ENCODE measurements at regions of chr15 and their contacts with region 1.

Region 1: DNA sequence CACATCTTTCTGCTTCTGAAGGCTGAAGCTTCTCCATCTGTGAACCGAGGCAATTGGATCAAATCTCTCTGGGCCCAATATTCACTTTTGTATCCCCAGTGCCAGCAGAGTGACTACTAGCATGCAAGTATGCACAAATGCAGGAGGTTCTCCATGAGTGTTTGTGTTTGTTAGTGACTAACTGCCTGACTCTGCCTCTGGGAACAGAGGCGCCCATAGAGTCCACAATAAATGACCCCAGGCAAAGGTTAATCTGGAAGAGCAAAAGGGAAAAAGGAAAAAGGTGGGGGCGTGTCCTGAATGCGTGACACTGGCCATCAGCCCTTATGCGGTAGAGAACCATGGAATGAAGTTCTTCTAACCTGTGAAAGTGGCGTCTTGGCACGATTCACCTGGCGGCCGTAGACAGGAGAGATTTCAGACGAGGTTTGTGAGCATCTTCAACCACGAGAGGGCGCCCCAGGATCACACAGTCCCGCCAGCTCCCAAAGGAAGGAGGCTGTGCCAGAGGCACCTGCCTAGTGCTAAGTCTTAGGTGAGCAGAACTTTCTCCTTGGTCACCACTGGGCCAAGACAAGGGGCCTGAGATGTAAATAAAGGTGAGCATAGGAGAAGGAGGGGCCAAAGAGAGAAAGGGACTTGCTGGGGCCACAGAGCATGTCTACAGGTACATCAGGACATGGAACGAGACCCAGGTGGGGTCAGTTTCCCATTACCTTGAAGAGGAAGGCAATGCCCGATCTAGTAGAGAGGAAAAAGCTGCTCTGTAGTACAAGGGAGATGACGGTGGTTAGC is 44.2 kb downstream of the RBPMS2 start:
- DNase-seq: peak; percentile 84 to 89
- H3K4me3 ChIP-seq: no peak overlapping the region
- H3K4me3 Mint-ChIP-seq: no peak overlapping the region
- H3K27ac Mint-ChIP-seq: no peak overlapping the region
- H3K4me1 ChIP-seq: no peaks in the 10 kb centered on the region
- H3K4me1 Mint-ChIP-seq: no peaks in the 10 kb centered on the region
- H3K27me3 ChIP-seq: no peaks in the 10 kb centered on the region
- H3K27me3 Mint-ChIP-seq: no peaks in the 10 kb centered on the region
- CTCF ChIP-seq: peak; percentile 89

Region 2: GRCh38 chr15:64216730-64217428 is 514.3 kb before region 1 on chr15:
- CTCF ChIA-PET with region 1: no interaction called
- POLR2A ChIA-PET with region 1: interaction called, 22 read pairs
- intact Hi-C with region 1: no loop called
- DNase-seq: peak; percentile 32 to 49
- H3K4me3 ChIP-seq: no peak overlapping the region
- H3K4me3 Mint-ChIP-seq: no peak overlapping the region
- H3K27ac Mint-ChIP-seq: no peak overlapping the region
- H3K4me1 ChIP-seq: peaks cover 14% of the 10 kb centered on the region
- H3K4me1 Mint-ChIP-seq: peaks cover 5% of the 10 kb centered on the region
- H3K27me3 ChIP-seq: no peaks in the 10 kb centered on the region
- H3K27me3 Mint-ChIP-seq: no peaks in the 10 kb centered on the region
- CTCF ChIP-seq: no peak

Region 3: DNA sequence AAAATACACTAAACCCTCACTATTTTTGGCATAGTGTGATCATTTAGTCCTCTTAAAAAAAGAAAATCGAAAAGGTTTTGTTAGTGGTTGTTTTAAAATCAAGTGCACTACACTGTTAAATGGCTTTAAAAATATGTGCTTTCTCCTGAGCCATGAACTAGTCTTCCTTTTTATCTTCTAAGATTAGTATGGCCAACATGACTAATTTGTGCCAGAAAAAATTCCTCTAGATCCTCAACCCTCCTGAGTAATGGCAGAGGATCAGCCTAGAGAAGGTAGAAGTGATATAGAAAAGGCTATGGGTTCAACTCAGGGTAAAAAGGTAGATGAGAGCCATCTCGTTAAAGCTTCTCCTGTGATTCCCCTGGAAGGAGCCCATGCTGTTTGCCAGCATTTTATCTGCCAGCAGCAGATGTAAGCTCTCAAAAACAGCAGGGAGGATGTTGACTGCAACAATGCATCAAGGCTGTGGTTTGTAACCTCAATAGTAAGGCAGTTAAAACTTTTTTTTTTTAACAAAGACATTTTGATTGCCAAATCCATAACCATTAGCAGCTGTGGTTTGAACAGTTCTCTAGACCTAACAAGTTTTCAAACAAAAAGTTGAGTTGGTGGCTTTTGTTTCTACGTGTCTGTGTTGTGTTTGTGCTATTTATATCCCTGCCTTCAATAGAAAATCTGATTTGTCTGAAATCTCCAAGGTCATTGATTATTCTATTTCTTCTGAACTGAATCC is 301.0 kb before region 1 on chr15:
- CTCF ChIA-PET with region 1: no interaction called
- POLR2A ChIA-PET with region 1: no interaction called
- intact Hi-C with region 1: loop called (anchors 2 kb)
- DNase-seq: no peak
- H3K4me3 ChIP-seq: no peak overlapping the region
- H3K4me3 Mint-ChIP-seq: no peak overlapping the region
- H3K27ac Mint-ChIP-seq: no peak overlapping the region
- H3K4me1 ChIP-seq: no peaks in the 10 kb centered on the region
- H3K4me1 Mint-ChIP-seq: no peaks in the 10 kb centered on the region
- H3K27me3 ChIP-seq: no peaks in the 10 kb centered on the region
- H3K27me3 Mint-ChIP-seq: no peaks in the 10 kb centered on the region
- CTCF ChIP-seq: no peak

Region 4: GRCh38 chr15:64681424-64682024 is 49.7 kb before region 1 on chr15:
- CTCF ChIA-PET with region 1: interaction called, 34 read pairs
- POLR2A ChIA-PET with region 1: no interaction called
- intact Hi-C with region 1: loop called (anchors 1 kb)
- DNase-seq: peak; percentile 69 to 75
- H3K4me3 ChIP-seq: no peak overlapping the region
- H3K4me3 Mint-ChIP-seq: no peak overlapping the region
- H3K27ac Mint-ChIP-seq: no peak overlapping the region
- H3K4me1 ChIP-seq: no peaks in the 10 kb centered on the region
- H3K4me1 Mint-ChIP-seq: no peaks in the 10 kb centered on the region
- H3K27me3 ChIP-seq: no peaks in the 10 kb centered on the region
- H3K27me3 Mint-ChIP-seq: no peaks in the 10 kb centered on the region
- CTCF ChIP-seq: peak; percentile 87 to 89

Region 5: GRCh38 chr15:64690578-64691296 is 40.5 kb before region 1 on chr15:
- CTCF ChIA-PET with region 1: interaction called, 34 read pairs
- POLR2A ChIA-PET with region 1: interaction called, 3 read pairs
- intact Hi-C with region 1: loop called (anchors 1 kb)
- DNase-seq: no peak
- H3K4me3 ChIP-seq: no peak overlapping the region
- H3K4me3 Mint-ChIP-seq: no peak overlapping the region
- H3K27ac Mint-ChIP-seq: no peak overlapping the region
- H3K4me1 ChIP-seq: no peaks in the 10 kb centered on the region
- H3K4me1 Mint-ChIP-seq: no peaks in the 10 kb centered on the region
- H3K27me3 ChIP-seq: no peaks in the 10 kb centered on the region
- H3K27me3 Mint-ChIP-seq: no peaks in the 10 kb centered on the region
- CTCF ChIP-seq: no peak

Region 6: DNA sequence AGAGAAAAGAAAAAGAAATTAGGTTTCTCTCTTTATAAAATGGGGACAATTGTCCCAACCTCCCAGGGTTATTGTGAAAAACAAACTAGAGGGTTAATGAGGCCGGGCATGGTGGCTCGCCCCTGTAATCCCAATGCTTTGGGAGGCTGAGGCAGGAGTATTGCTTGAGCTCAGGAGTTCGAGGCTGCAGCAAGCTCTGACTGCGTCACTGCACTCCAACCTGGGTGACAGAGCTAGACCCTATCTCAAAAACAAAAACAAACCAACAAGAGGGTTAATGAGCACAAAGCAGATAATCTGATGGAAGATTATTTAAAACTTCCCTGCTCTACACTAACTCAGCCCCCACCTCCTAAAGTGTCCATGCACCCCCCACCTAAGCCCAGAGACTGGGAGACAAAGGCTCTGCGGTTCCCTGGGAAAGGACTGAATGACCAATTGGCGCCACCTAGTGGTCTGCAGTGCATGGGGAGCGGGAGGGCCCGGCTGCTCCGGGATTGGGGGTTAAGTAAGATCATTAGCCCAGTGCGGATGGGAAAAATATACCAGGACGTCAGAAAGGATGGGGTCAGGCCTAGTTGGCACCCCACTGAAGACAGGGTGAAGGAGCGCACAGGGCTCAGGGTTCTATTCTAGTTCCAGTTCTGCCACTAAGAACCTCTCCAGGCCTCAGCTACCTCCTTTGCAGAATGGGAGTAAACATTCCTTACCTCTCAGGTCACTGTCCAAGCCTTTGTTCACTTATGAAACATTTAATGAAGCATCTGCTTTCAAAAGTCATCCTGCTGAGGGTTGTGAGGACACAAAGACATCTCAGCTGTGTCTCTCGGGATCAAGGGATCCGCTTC is 78.7 kb after region 1 on chr15:
- CTCF ChIA-PET with region 1: interaction called, 39 read pairs
- POLR2A ChIA-PET with region 1: no interaction called
- intact Hi-C with region 1: loop called (anchors 1 kb)
- DNase-seq: peak; percentile 76 to 83
- H3K4me3 ChIP-seq: no peak overlapping the region
- H3K4me3 Mint-ChIP-seq: no peak overlapping the region
- H3K27ac Mint-ChIP-seq: no peak overlapping the region
- H3K4me1 ChIP-seq: 0 out of 2 replicates have a peak, but pooled peaks cover 8% of the 10 kb centered on the region
- H3K4me1 Mint-ChIP-seq: peaks cover 8% of the 10 kb centered on the region
- H3K27me3 ChIP-seq: no peaks in the 10 kb centered on the region
- H3K27me3 Mint-ChIP-seq: no peaks in the 10 kb centered on the region
- CTCF ChIP-seq: peak; percentile 85 to 95